ENCODE measurements at regions of chr20 and their contacts with region 1.

Region 1: DNA sequence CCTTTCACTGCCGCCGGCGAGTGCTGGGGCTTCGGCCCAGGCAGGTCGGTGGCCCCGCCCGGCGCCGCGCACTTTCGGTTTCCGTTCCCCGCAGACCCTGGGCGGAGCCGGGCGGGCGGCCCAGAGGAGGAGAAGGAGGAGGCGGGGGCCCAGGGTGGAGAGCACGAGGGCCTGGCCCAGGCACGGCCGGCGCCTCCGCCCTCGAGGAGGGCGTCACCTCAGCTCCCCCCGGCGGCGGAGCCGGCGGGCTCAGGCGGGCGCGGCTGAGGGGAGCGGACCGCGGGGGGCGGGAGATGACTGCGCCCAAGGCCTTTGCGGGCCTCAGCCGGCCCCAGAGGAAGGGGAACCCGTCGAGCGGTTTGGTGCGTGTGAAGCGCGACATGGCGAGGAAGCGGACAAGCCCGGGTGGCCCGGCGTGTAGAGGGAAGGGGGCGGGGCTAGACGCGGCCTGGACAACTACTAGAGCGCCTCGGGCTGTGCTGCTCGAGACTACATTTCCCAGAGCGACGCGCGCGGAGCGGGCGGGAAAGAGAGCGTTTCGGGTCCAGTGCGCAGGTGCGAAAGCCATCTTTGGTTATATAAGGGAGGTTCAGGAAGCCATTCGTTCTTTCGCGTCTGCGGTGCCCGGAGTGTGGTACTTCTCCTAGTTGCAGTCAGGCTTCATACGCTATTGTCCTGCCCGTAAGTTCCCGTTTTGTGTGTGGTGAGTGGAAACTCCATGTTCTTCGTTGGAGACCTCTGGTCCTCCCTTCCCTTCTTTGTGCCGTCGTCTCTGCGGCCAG is at the start of gene ZNFX1:
- DNase-seq: peak; percentile 99
- H3K4me3 Mint-ChIP-seq: peak within 1 kb of the TSS; percentile 99
- H3K27ac Mint-ChIP-seq: peak within 1 kb of the TSS; percentile 99
- H3K4me1 Mint-ChIP-seq: peaks cover 52% of the 10 kb centered on the region
- H3K27me3 Mint-ChIP-seq: no peaks in the 10 kb centered on the region
- total RNA-seq, gene ZNFX1: 61.2 and 61.5 TPM in 2 replicates

Region 2: GRCh38 chr20:48635433-48636310 is 642.6 kb before region 1 on chr20:
- intact Hi-C with region 1: no loop called
- DNase-seq: peak; percentile 91
- H3K4me3 Mint-ChIP-seq: no peak overlapping the region
- H3K27ac Mint-ChIP-seq: peak overlapping the region; percentile 79
- H3K4me1 Mint-ChIP-seq: peaks cover 5% of the 10 kb centered on the region
- H3K27me3 Mint-ChIP-seq: no peaks in the 10 kb centered on the region

Region 3: GRCh38 chr20:48738399-48739304 is 539.6 kb before region 1 on chr20:
- intact Hi-C with region 1: no loop called
- DNase-seq: peak; percentile 89
- H3K4me3 Mint-ChIP-seq: peak overlapping the region; percentile 70
- H3K27ac Mint-ChIP-seq: peak overlapping the region; percentile 91
- H3K4me1 Mint-ChIP-seq: peaks cover 56% of the 10 kb centered on the region
- H3K27me3 Mint-ChIP-seq: no peaks in the 10 kb centered on the region

Region 4: GRCh38 chr20:49166534-49167449 is 111.4 kb before region 1 on chr20:
- intact Hi-C with region 1: loop called (anchors 5 kb)
- DNase-seq: peak; percentile 69
- H3K4me3 Mint-ChIP-seq: peak overlapping the region; percentile 72
- H3K27ac Mint-ChIP-seq: peak overlapping the region; percentile 90
- H3K4me1 Mint-ChIP-seq: peaks cover 49% of the 10 kb centered on the region
- H3K27me3 Mint-ChIP-seq: no peaks in the 10 kb centered on the region

Region 5: DNA sequence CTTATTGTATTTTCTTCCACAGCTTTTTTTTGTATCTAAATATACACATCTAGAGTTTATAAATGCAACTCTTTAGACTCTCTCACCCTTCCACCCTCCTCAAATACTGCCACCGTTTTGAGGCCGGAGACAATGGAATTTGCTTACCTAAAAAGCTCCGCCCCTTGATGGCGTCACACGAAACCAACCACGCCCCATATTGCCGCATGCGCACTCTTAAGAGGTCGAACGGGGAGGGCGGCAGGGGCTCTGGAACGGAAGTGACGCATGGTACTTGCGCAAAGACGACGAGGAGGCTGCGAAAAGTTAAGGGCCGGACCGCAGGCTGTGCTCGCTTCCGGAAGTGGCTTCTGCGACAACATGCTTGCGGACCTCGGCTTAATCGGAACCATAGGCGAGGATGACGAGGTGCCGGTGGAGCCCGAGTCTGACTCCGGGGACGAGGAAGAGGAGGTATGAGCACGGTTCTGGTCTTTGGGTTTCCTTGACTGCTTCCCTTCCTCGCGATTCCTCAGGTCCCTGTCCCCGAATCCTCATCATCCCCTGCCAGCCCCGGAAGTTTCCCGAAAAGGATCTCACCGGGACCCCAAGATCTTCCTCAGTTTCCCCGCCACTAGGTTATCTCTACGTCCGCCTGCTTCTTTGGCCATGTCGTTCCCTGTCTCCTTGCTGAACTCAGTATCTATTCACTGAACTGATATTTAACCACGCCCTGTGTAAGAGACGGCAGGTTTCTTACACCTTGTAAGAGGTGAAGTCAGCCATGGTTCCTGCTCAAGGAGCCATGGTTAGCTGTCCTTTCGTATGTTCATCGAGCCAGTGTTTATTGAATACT is 58.9 kb before region 1 on chr20 and contains the start of gene DDX27:
- intact Hi-C with region 1: loop called (anchors 1 kb)
- DNase-seq: peak; percentile 99
- H3K4me3 Mint-ChIP-seq: peak within 1 kb of the TSS; percentile 94
- H3K27ac Mint-ChIP-seq: peak within 1 kb of the TSS; percentile 97
- H3K4me1 Mint-ChIP-seq: peaks cover 18% of the 10 kb centered on the region
- H3K27me3 Mint-ChIP-seq: peaks cover 4% of the 10 kb centered on the region
- total RNA-seq, gene DDX27: 56.5 and 56.9 TPM in 2 replicates

Region 6: DNA sequence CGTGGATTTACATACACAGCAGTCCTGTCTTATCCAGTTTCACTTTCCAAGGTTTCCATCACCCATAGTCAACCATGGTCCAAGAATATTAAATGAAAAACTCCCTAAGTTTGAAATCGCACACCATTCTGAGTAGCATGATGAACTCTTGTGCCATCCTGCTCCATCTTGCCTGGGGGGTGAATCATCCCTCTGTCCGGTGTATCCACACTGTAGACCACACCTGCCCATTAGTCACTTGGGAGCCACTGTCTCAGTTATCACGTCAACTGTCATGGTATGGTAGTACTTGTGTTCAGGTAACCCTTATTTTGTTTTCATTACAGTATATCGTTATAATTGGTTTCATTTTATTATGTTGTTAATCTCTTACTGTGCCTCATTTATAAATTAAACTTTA is 251.2 kb after region 1 on chr20:
- intact Hi-C with region 1: no loop called
- DNase-seq: no peak
- H3K4me3 Mint-ChIP-seq: no peak overlapping the region
- H3K27ac Mint-ChIP-seq: no peak overlapping the region
- H3K4me1 Mint-ChIP-seq: peaks cover 6% of the 10 kb centered on the region
- H3K27me3 Mint-ChIP-seq: peaks cover 11% of the 10 kb centered on the region

Region 7: GRCh38 chr20:49541733-49542513 is 263.7 kb after region 1 on chr20:
- intact Hi-C with region 1: loop called (anchors 5 kb)
- DNase-seq: peak; percentile 90
- H3K4me3 Mint-ChIP-seq: peak overlapping the region; percentile 33
- H3K27ac Mint-ChIP-seq: peak overlapping the region; percentile 95
- H3K4me1 Mint-ChIP-seq: peaks cover 31% of the 10 kb centered on the region
- H3K27me3 Mint-ChIP-seq: peaks cover 2% of the 10 kb centered on the region

Region 8: GRCh38 chr20:50115591-50116372 is 837.6 kb after region 1 on chr20:
- intact Hi-C with region 1: loop called (anchors 5 kb)
- DNase-seq: peak; percentile 97
- H3K4me3 Mint-ChIP-seq: peak overlapping the region; percentile 98
- H3K27ac Mint-ChIP-seq: peak overlapping the region; percentile 85
- H3K4me1 Mint-ChIP-seq: peaks cover 47% of the 10 kb centered on the region
- H3K27me3 Mint-ChIP-seq: no peaks in the 10 kb centered on the region

Region 9: GRCh38 chr20:50929299-50930138 is 1651.3 kb after region 1 on chr20:
- intact Hi-C with region 1: loop called (anchors 5 kb)
- DNase-seq: peak; percentile 97
- H3K4me3 Mint-ChIP-seq: peak overlapping the region; percentile 94
- H3K27ac Mint-ChIP-seq: peak overlapping the region; percentile 98
- H3K4me1 Mint-ChIP-seq: peaks cover 46% of the 10 kb centered on the region
- H3K27me3 Mint-ChIP-seq: no peaks in the 10 kb centered on the region

Measured in activated CD4-positive, alpha-beta T cell treated with anti-CD3 and anti-CD28 coated beads, Interleukin-2, amount 10 ng/mL, durations not matched to agents 24 days and 14 days (primary cell).